Colonic mucosa (tissue), 4 donors: ENCODE measurements at regions of chr3 and their contacts with region 1.

Region 1: GRCh38 chr3:127817396-127817841 is 4.9 kb downstream of the MGLL start:
- DNase-seq: peak; percentile 79
- H3K4me3 ChIP-seq: no peak overlapping the region
- H3K27ac ChIP-seq: peak overlapping the region; percentile 90
- H3K4me1 ChIP-seq: peaks cover 23% of the 10 kb centered on the region
- H3K27me3 ChIP-seq: no peaks in the 10 kb centered on the region
- CTCF ChIP-seq: no peak

Region 2: GRCh38 chr3:127747723-127748521 is 69.5 kb before region 1 on chr3:
- intact Hi-C with region 1: loop called (anchors 5 kb)
- DNase-seq: peak; percentile 85
- H3K4me3 ChIP-seq: no peak overlapping the region
- H3K27ac ChIP-seq: peak overlapping the region; percentile 77
- H3K4me1 ChIP-seq: peaks cover 9% of the 10 kb centered on the region
- H3K27me3 ChIP-seq: no peaks in the 10 kb centered on the region
- CTCF ChIP-seq: no peak